ENCODE measurements at regions of chr6 and their contacts with region 1.

Region 1: DNA sequence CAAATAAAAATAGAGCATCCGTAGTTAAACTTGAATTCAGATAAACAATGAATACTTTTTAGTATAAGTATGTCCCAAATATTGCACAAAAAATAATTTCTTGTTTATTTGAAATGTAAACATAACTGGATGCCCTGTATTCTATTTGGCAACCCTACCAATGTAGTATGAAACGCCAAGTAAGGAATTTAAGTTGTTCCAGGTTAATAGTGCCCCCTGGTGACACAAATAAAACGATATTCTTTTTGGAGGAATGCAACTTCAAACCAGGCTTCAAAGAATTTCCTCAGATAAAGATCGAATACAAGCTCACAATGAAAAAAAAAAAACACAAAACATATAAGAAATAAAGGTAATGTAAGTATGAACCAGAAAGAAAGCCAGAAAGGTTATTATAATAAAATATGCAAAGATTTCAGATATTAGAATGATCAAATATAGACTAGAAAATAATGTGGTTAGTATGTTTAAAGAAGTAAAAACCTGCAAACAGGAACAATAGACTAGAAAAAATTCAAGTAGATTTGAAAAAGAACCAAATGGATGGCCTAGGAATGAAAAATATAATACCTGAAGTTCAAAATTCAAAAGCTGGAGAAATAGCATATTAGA is 18.4 kb upstream of the AKAP7 start:
- DNase-seq: peak; percentile 22
- CTCF ChIP-seq: peak; percentile 49

Region 2: GRCh38 chr6:130893277-130893676 is 223.6 kb before region 1 on chr6:
- CTCF ChIA-PET with region 1: interaction called, 139 read pairs
- POLR2A ChIA-PET with region 1: no interaction called
- DNase-seq: no peak
- CTCF ChIP-seq: no peak

Region 3: DNA sequence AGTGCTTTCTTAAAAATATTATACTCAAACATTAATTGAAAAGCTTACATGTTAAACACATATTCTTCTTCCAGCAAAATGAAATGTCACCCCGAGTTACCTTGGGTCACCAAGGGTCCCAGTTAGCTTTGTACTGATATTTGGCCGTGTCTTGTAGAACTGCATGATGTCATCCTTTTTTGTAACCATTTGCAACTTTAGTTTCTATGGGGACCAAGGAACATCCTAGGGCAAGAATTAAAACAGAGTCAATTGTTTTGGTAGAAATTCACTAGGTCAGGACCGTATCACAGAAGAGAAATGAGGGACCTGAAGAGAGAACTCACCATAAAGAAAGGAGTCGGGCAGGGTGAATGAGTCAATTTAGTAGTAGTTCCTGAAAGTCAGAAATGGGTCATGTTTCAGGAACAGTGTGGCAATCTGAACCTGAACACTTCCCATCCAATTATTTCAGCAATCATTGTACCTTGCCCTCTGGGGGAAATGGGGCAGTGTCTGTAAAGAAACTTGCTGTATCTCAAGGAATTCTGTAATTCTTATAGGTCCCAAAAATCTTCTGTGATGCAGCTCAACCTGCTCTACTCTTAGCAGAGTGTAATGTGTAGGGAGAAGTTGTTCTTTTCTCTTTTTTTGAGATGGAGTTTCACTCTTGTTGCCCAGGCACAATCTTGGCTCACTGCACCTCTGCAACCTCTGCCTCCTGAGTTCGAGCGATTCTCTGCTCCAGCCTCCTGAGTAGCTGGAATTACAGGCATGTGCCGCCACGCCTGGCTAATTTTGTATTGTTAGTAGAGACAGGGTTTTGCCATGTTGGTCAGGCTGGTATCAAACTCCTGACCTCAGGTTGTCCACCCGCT is 13.1 kb after region 1 on chr6:
- CTCF ChIA-PET with region 1: interaction called, 17 read pairs
- POLR2A ChIA-PET with region 1: no interaction called
- DNase-seq: no peak
- CTCF ChIP-seq: no peak